Left ventricle myocardium inferior (tissue), 1 donor: ENCODE measurements at regions of chr13 and their contacts with region 1.

Region 1: GRCh38 chr13:39415008-39415802 is 187.8 kb downstream of the LHFPL6 start:
- DNase-seq: peak; percentile 56
- H3K4me3 ChIP-seq: peak overlapping the region; percentile 29
- H3K27ac ChIP-seq: peak overlapping the region; percentile 85
- H3K4me1 ChIP-seq: peaks cover 92% of the 10 kb centered on the region
- H3K27me3 ChIP-seq: no peaks in the 10 kb centered on the region
- CTCF ChIP-seq: peak; percentile 79

Region 2: DNA sequence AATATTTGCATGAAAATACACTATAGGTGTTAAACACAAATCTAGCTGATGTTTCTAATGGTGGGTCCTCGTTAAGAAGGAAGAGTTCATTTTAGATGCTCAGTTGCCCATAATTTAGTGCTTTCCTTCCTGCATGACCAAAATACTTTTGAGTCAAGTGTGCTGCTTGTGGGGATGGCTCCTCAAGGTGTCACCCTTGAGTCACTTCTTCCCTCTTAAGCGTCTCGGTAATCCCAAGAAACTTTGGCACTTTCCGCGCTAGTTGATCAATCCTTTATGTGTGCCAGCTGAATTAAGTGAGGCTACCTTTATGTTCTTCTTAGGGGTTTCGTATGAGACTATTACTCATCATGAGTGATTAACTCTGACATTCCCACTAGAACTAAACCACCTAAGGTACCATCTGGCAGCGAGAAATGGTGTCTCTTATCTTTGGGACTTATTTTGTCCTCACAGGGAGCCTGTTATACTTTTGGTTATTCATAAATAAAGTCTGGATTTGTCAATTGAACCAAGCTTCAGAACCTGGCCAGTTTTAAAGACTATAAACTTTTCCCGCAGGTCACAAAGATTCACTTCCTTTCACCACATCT is 270.2 kb before region 1 on chr13:
- intact Hi-C with region 1: loop called (anchors 10 kb)
- DNase-seq: peak; percentile 40
- H3K4me3 ChIP-seq: peak overlapping the region; percentile 48
- H3K27ac ChIP-seq: peak overlapping the region; percentile 51
- H3K4me1 ChIP-seq: peaks cover 17% of the 10 kb centered on the region
- H3K27me3 ChIP-seq: no peaks in the 10 kb centered on the region
- CTCF ChIP-seq: peak; percentile 89

Region 3: DNA sequence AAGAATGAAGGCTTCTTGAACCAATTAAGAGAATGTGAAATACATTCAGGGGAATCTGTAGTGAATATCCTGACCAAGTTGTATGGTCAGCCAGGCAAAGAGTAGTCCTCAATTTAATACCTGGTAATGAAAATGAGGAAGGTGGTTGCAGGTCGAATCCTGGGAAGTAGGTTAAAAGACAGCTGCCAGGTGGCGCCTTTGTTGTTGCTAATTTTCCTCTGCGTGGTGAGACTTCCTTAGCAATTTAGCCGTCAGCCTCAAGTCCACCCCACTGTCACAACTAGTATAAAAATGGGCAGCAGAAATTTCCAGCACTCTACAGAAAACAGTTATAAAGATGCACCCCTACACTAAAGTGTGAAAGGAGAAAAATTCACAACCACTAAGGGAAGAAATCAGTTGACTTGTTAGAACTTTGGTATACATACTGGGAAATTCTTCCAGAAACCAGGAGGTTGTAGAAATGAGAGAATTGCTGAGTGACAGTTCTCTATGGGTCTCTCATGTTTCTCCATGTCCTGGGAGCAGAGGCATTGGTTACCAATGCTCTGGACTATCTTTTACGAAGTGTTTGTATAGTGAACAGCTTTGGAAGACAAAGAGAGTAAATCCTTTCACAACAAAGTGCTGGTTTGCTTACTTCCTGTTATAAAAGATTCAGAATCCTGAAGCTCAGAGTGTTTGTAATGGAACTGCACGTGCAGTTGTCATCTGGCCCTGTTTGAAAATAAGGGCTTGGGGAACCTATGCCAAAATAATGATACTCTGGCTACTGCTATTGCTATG is 141.1 kb before region 1 on chr13:
- intact Hi-C with region 1: loop called (anchors 10 kb)
- DNase-seq: no peak
- H3K4me3 ChIP-seq: no peak overlapping the region
- H3K27ac ChIP-seq: peak overlapping the region; percentile 53
- H3K4me1 ChIP-seq: peaks cover 19% of the 10 kb centered on the region
- H3K27me3 ChIP-seq: no peaks in the 10 kb centered on the region
- CTCF ChIP-seq: peak; percentile 46

Region 4: GRCh38 chr13:39451860-39452301 is 36.7 kb after region 1 on chr13:
- intact Hi-C with region 1: loop called (anchors 5 kb)
- DNase-seq: peak; percentile 59
- H3K4me3 ChIP-seq: peak overlapping the region; percentile 13
- H3K27ac ChIP-seq: peak overlapping the region; percentile 89
- H3K4me1 ChIP-seq: peaks cover 96% of the 10 kb centered on the region
- H3K27me3 ChIP-seq: no peaks in the 10 kb centered on the region
- CTCF ChIP-seq: no peak

Region 5: DNA sequence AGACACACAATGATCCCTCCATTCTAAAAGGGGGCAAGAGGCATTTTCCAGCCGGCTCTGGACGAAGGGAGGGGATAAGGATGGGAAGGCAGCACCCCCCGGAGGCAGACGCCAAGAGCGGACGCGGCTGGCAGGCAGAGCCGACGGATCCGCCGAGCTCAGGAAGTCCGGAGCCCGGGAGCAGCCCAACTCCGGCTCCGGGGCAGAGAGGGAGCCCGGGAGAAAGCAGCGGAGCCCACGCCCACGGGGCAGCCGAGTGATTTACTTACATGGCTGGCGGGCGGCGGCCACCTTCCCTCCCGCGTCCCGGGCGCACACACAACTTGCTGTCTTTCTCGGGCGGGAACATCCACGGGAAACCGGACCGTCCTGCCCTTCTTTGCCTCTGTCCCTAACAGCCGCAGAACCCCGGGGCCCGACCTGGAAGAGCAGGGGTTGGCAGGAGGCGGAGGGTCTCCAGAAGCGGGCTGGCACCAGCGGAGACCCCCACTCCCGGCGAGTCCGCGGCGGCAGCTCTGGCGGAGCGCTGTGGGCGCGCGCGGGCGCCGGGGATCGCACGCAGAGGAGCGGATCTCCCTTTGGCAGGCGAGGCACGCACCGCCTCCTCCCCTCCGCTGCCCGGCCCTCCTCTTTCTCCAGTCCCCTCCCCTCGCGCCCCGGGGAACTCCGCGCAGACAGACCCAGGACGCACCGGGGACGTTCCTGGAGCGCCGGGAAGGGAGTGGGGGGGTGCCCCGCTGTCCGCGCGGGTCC is 187.6 kb after region 1 on chr13 and contains the start of gene LHFPL6:
- intact Hi-C with region 1: loop called (anchors 5 kb)
- DNase-seq: peak; percentile 92
- H3K4me3 ChIP-seq: peak within 1 kb of the TSS; percentile 85
- H3K27ac ChIP-seq: peak within 1 kb of the TSS; percentile 95
- H3K4me1 ChIP-seq: peaks cover 64% of the 10 kb centered on the region
- H3K27me3 ChIP-seq: no peaks in the 10 kb centered on the region
- CTCF ChIP-seq: peak; percentile 52
- total RNA-seq, gene LHFPL6: 51.4 TPM